Breast epithelium (tissue), 4 donors: ENCODE measurements at regions of chr22 and their contacts with region 1.

Region 1: GRCh38 chr22:33051960-33052839 is 6.0 kb downstream of the SYN3 start:
- DNase-seq: no peak
- H3K4me3 ChIP-seq: no peak overlapping the region
- H3K27ac ChIP-seq: no peak overlapping the region
- H3K4me1 ChIP-seq: no peaks in the 10 kb centered on the region
- H3K27me3 ChIP-seq: peaks cover 0 to 43% of the 10 kb centered on the region in 2 donors
- CTCF ChIP-seq: no peak
- POLR2A ChIP-seq: no peak

Region 2: DNA sequence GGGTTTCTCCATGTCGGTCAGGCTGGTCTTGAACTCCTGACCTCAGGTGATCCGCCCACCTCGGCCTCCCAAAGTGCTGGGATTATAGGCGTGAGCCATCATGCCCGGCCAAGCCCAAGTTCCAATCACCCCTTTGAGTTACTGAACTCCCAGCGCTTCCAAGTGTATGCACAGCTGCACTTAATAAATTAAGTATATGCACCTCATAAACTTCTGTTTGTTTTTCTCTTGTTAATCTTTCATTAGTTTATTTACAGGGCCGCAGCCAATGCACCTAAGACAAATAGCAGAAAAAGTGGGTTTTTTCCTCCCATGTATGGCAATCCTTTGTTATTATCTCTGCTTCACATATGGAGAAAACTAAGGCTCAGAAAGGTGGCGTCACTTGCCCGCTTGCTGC is 15.3 kb before region 1 on chr22:
- intact Hi-C with region 1: loop called (anchors 2 kb)
- DNase-seq: no peak
- H3K4me3 ChIP-seq: no peak overlapping the region
- H3K27ac ChIP-seq: no peak overlapping the region
- H3K4me1 ChIP-seq: no peaks in the 10 kb centered on the region
- H3K27me3 ChIP-seq: no peaks in the 10 kb centered on the region
- CTCF ChIP-seq: no peak
- POLR2A ChIP-seq: no peak